Mucosa of descending colon (tissue), 3 donors: ENCODE measurements at regions of chr3 and their contacts with region 1.

Region 1: DNA sequence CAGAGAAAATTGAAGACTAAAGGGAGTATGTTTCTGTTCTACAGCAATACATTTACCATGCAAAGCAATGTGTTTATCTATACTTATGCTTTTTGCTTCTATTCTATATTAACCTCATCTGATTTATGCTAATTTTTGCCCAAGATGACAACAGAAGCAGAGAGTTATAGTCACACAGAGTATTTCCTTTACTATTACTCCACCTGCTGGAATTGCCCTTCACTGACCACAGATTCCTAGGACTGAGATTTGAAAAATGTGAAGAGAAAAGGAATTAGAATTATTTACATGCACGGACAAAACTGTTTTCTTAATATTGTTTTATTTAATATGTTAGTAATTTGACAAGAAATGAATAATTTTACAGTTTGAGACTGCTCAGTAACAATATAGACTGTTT is 745.6 kb downstream of the VGLL3 start:
- DNase-seq: peak in 1 of 3 donors; percentile 5
- ATAC-seq: no peak
- H3K4me3 ChIP-seq: no peak overlapping the region
- H3K4me1 ChIP-seq: no peaks in the 10 kb centered on the region
- CTCF ChIP-seq: no peak

Region 2: DNA sequence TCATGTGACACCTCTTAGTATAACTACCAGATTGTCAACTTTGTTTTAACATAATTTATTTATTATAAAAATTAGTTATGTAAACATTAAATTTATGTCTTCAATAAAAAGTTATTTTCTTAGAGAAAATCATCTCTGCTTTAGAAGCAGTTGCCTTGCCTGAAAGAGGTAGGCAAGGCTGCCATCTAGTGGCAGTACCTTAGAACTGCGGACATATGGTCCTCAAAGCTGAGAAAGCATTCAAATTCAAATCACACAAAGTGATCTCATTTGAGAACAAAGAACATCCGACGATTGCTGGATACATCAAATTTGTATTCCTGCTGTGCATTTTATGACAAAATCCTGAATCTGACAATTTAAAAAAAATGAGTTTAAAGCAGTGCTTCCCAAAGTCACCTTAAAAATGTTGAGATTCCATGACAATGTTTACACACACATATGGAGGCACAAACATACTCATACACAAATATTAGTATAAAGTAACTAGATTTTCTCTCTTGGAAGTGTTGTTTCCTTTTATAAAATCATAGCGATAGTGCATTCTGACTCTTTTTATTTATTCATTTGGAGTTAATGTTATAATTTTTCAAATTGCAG is 669.2 kb before region 1 on chr3:
- intact Hi-C with region 1: loop called in 1 of 2 experiments (anchors 10 kb)
- DNase-seq: peak in 2 of 3 donors; percentile 25 to 55
- ATAC-seq: peak; percentile 66
- H3K4me3 ChIP-seq: no peak overlapping the region
- H3K4me1 ChIP-seq: no peaks in the 10 kb centered on the region
- CTCF ChIP-seq: peak; percentile 66

Region 3: DNA sequence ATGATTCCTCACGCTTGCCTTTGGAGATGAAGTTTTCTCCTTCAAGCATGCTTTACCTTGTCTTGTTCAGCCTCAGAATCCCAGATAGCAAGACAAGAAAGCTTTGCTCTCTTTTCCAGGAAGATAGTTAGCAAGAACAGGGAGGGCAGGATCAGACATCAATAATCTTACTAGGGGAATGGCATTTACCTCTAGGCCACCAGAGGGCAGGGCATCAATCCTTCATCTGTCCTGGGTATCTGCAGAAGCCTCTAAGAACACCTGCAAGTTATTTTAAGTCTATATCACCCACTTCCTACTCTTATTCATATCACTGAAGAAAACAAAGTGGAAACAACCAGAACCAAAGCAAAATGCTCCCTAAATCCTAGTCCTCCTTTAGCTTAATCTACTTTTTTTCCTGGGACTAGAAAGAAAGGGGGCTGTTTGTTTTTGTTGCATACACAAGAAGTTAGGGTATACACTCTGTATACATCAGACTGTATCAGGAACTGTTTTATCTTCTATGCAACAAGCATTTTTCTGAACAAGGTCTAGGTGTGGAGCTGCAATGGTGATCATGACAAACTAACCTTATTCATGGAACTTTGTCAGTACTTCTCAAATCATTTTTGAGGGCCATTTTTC is 424.1 kb before region 1 on chr3:
- intact Hi-C with region 1: loop called in 1 of 2 experiments (anchors 5 kb)
- DNase-seq: peak in 1 of 3 donors; percentile 55
- ATAC-seq: peak; percentile 40
- H3K4me3 ChIP-seq: no peak overlapping the region
- H3K4me1 ChIP-seq: no peaks in the 10 kb centered on the region
- CTCF ChIP-seq: no peak

Region 4: GRCh38 chr3:86175593-86176444 is 69.5 kb before region 1 on chr3:
- intact Hi-C with region 1: loop called in 1 of 2 experiments (anchors 2 kb)
- DNase-seq: no peak
- ATAC-seq: peak; percentile 65
- H3K4me3 ChIP-seq: no peak overlapping the region
- H3K4me1 ChIP-seq: no peaks in the 10 kb centered on the region
- CTCF ChIP-seq: no peak